ENCODE measurements at regions of chr20 and their contacts with region 1.

Region 1: DNA sequence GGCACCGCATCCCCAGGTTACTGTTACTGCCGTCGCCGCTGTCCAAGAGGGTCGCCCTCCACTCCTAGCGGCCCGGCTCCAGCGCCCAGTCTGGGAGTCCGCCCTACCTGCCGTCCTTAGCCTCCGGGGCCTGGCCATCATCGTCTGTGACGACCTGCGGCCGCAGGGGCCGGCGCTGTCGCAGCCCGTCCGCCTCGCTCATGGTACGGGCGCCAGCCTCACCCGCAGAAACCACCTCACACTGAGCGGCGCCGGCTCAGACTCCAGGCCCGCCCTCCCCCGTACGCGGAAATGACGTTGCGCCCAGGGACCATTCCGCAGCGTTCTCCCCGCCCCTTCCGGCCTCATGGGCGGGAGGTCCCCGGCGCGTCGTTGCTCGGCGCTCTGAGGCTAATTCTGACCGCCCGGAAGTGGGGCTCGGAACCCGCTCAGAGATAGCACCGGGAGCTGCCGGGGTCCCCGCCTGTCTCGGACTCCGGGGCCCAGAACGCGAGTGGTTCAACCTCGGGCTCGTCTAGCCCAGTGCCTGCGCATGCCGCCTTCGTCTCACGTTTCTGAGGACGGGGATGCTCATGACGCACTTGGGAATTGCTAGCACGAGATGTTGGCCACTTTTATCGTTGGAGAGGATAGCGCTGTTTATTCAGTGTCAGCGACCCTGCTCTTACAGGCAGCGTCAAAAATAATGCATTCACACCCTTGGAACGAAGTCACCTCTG is at the start of gene APMAP:
- DNase-seq: peak; percentile 89 to 99 (median 96)
- ATAC-seq: peak; percentile 91
- H3K4me3 ChIP-seq: peak within 1 kb of the TSS; percentile 87
- H3K4me3 Mint-ChIP-seq: peak within 1 kb of the TSS; percentile 96
- H3K27ac ChIP-seq: peak within 1 kb of the TSS; percentile 90 to 97
- H3K27ac Mint-ChIP-seq: peak within 1 kb of the TSS; percentile 99
- H3K4me1 ChIP-seq: peaks cover 42% of the 10 kb centered on the region
- H3K4me1 Mint-ChIP-seq: peaks cover 73% of the 10 kb centered on the region
- H3K27me3 ChIP-seq: no peaks in the 10 kb centered on the region
- H3K27me3 Mint-ChIP-seq: no peaks in the 10 kb centered on the region
- CTCF ChIP-seq: no peak
- total RNA-seq, gene APMAP: 9.5 to 11.3 TPM

Region 2: GRCh38 chr20:23420943-23421931 is 1571.4 kb before region 1 on chr20 and contains the start of gene NAPB:
- CTCF ChIA-PET with region 1: no interaction called
- POLR2A ChIA-PET with region 1: no interaction called
- intact Hi-C with region 1: loop called in 1 of 2 experiments (anchors 5 kb)
- DNase-seq: peak; percentile 86 to 95 (median 92)
- ATAC-seq: peak; percentile 99
- H3K4me3 ChIP-seq: peak within 1 kb of the TSS; percentile 97
- H3K4me3 Mint-ChIP-seq: peak within 1 kb of the TSS; percentile 93
- H3K27ac ChIP-seq: peak within 1 kb of the TSS; percentile 36 to 49
- H3K27ac Mint-ChIP-seq: peak within 1 kb of the TSS; percentile 85
- H3K4me1 ChIP-seq: peaks cover 14% of the 10 kb centered on the region
- H3K4me1 Mint-ChIP-seq: peaks cover 40% of the 10 kb centered on the region
- H3K27me3 ChIP-seq: no peaks in the 10 kb centered on the region
- H3K27me3 Mint-ChIP-seq: peaks cover 14% of the 10 kb centered on the region
- CTCF ChIP-seq: peak; percentile 48
- total RNA-seq, gene NAPB: 7.5 to 8.9 TPM

Region 3: DNA sequence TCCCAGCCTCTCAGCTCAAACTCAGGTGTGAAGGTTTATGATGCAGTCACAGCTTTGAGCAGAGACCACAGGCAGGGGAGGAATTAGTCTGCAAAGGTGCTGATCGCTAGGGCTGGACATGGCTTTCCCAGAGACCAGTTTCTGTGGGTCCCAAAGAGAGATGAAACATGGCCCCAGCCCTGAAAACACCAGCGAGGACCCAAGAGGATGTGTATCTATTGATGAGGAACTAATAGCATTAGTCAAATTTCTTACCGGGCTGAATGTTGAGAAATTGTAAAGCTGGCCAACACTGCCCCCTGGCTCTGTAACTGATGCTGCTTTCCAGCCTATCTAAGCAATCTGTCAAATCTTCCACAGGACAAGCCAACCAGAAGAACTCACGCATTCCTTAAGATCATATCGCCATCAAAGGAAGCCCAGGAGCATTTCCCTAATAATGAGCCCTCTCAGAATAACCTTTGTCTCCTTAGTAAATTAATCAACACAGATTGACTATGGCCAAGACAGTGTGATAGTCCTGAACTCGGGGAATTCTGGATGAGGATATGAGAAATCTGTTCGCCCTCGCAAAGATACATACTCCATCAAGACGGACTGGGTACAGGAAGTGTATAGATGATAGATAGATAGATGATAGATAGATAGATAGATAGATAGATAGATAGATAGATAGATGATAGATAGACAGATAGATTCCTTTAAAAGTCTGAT is 73.1 kb after region 1 on chr20:
- CTCF ChIA-PET with region 1: interaction called, 33 read pairs
- POLR2A ChIA-PET with region 1: interaction called, 10 read pairs
- intact Hi-C with region 1: loop called (anchors 1 kb)
- DNase-seq: peak; percentile 55 to 85 (median 64)
- ATAC-seq: peak; percentile 69
- H3K4me3 ChIP-seq: no peak overlapping the region
- H3K4me3 Mint-ChIP-seq: no peak overlapping the region
- H3K27ac ChIP-seq: no peak overlapping the region
- H3K27ac Mint-ChIP-seq: no peak overlapping the region
- H3K4me1 ChIP-seq: peaks cover 6% of the 10 kb centered on the region
- H3K4me1 Mint-ChIP-seq: peaks cover 7% of the 10 kb centered on the region
- H3K27me3 ChIP-seq: peaks cover 6 to 13% of the 10 kb centered on the region in 2 experiments
- H3K27me3 Mint-ChIP-seq: peaks cover 26% of the 10 kb centered on the region
- CTCF ChIP-seq: peak; percentile 75

Region 4: DNA sequence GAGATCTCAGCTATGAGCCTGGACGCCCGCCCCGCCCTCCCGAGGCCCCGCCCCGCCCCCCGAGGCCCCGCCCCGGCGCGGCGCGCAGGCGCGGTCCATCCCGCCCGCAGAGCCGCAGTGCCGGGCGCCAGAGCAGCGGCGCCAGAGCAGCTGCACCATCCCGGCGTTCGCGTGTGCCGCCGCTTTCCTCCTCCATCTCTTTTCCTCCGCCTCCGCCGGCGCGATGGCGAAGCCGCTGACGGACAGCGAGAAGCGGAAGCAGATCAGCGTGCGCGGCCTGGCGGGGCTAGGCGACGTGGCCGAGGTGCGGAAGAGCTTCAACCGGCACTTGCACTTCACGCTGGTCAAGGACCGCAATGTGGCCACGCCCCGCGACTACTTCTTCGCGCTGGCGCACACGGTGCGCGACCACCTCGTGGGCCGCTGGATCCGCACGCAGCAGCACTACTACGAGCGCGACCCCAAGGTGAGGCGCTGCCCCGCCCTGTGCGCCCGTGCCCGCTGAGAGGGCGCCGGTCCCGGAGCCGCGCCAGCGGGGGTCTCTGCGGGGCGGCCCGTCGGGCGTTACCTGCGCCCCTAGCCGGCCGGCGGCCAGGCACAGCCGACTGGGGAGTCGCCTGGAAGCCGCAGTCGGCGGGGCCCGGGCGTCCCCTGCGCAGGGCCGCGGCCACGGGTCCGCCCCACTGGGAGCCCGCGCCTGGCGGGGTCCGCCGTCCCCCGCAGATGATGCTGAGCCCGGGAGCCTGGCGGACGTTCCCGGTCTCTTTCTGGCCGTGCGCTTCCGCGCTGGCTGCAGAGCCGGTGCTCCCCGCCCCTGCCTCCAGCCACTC is 255.5 kb after region 1 on chr20 and contains the start of gene PYGB:
- CTCF ChIA-PET with region 1: no interaction called
- POLR2A ChIA-PET with region 1: interaction called, 3 read pairs
- intact Hi-C with region 1: loop called in 1 of 2 experiments (anchors 5 kb)
- DNase-seq: peak; percentile 59 to 90 (median 72)
- ATAC-seq: peak; percentile 86
- H3K4me3 ChIP-seq: peak within 1 kb of the TSS; percentile 94
- H3K4me3 Mint-ChIP-seq: peak within 1 kb of the TSS; percentile 95
- H3K27ac ChIP-seq: no peak within 1 kb of the TSS
- H3K27ac Mint-ChIP-seq: peak within 1 kb of the TSS; percentile 80
- H3K4me1 ChIP-seq: peaks cover 29% of the 10 kb centered on the region
- H3K4me1 Mint-ChIP-seq: peaks cover 56% of the 10 kb centered on the region
- H3K27me3 ChIP-seq: no peaks in the 10 kb centered on the region
- H3K27me3 Mint-ChIP-seq: peaks cover 6% of the 10 kb centered on the region
- CTCF ChIP-seq: no peak
- total RNA-seq, gene PYGB: 26.3 to 27.5 TPM

Region 5: DNA sequence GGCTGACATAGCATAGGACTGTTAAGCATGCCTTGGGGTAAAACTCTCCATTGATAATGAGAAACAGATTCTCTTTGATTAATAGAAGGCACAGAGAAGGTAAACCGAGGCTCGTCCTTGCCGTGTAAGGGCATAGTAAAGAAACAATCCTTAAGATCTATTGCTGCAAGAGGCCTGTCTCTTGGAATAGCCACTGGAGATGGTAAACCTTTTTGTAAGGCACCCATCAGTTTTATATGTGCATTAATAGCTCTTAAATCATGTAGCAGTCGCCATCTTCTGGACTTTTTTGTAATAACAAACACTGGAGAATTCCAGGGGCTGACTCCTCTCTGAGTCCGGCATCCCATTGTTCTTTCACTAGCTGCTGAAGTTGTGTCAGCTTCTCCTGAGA is 406.4 kb after region 1 on chr20:
- CTCF ChIA-PET with region 1: interaction called, 7 read pairs
- POLR2A ChIA-PET with region 1: no interaction called
- intact Hi-C with region 1: loop called (anchors 2 kb)
- DNase-seq: peak in 4 of 14 experiments; percentile 20 to 72 (median 67)
- ATAC-seq: no peak
- H3K4me3 ChIP-seq: no peak overlapping the region
- H3K4me3 Mint-ChIP-seq: no peak overlapping the region
- H3K27ac ChIP-seq: no peak overlapping the region
- H3K27ac Mint-ChIP-seq: no peak overlapping the region
- H3K4me1 ChIP-seq: no peaks in the 10 kb centered on the region
- H3K4me1 Mint-ChIP-seq: no peaks in the 10 kb centered on the region
- H3K27me3 ChIP-seq: no peaks in the 10 kb centered on the region
- H3K27me3 Mint-ChIP-seq: peaks cover 9% of the 10 kb centered on the region
- CTCF ChIP-seq: peak; percentile 66

Measured in CD4-positive, alpha-beta T cell (primary cell).